ENCODE measurements at regions of chr2 and their contacts with region 1.

Region 1: DNA sequence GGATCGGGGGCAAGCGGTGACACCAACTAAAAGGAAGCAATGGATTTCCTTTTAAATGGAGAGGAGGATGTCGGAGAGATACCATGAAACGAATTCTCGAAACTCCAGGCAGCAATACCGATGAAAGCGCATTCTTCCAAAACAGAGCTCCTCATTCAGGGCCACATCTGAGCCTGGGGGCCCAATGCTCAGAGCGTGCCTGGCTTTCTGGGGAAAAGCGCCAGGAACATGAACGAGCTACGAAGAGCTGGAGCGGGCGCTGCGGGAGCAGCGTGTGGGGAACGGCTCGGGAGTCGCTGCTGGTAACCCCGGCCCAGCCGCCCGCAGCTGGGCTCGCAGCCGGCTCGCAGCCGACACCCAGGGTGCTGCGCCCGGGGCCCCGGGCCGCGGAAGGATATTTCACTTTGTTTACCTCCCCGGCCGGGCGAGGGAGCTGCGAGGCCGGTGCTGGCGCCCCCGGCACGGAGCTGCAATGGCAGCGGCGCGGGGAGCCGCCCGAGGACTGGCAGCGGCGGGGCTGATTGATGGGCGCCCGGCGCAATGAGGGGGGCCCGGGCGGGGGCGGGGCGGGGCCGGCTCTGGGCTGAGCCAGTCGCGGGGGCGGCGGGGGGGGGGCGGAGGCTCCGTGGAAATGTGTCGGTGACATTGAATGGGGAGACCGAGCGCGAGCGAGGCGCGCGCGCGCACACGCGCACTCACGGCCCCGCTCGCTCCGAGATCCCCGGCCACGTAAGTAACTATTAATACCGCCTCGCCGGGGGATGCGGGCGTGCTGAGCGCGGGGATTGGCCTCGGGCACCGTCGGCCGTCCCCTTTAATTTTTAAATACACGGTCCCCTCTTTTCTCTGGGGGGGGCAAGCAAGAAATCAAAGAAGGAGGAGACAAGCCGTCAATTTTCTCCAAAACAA is at the start of gene TRIB2:
- DNase-seq: peak; percentile 85 to 99 (median 92)
- ATAC-seq: peak; percentile 75
- H3K4me3 ChIP-seq: peak within 1 kb of the TSS; percentile 93
- H3K4me3 Mint-ChIP-seq: peak within 1 kb of the TSS; percentile 100
- H3K27ac ChIP-seq: peak within 1 kb of the TSS; percentile 68 to 88
- H3K27ac Mint-ChIP-seq: peak within 1 kb of the TSS; percentile 93
- H3K4me1 ChIP-seq: peaks cover 27% of the 10 kb centered on the region
- H3K4me1 Mint-ChIP-seq: peaks cover 49% of the 10 kb centered on the region
- H3K27me3 ChIP-seq: no peaks in the 10 kb centered on the region
- H3K27me3 Mint-ChIP-seq: no peaks in the 10 kb centered on the region
- CTCF ChIP-seq: peak; percentile 45
- total RNA-seq, gene TRIB2: 91.3 to 102 TPM

Region 2: DNA sequence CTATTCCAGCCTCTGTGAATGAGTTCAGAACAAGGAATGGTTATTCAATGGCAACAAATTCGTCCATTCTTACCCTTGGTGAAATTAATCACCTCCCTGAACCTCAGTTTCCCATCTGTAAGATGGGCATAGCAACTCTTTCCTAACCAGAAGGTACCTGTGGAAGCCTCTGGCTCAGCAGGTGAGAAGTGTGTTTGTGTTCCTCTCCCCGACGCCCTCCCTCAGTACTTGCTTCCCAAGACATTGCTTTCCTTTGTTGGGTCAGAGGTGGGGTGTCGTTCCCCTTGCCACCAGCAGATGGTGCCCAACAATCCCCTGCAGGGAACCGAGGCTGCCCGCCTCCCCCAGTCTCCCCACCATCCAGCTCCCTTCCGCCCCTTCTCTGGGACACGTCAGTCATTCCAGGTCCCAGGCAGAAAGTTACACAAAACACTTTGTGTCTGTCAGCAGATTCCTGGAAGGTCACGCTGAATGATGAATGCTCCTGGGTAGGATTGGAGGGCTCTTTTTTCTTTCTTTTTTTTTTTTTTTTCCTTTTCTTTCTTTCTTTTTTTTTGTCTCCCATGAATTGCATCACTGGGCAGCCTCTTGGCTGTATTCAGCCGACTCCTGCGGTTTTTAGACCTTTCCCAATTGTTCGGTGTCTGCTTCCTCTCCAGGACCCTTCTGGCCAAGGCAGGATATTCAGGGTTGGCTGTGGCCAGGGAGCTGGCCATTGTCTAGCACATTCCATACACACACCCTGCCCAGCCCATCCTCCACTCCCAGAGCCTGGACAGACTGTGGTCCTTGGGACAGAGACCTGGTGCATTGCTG is 852.8 kb before region 1 on chr2:
- CTCF ChIA-PET with region 1: interaction called, 6 read pairs
- POLR2A ChIA-PET with region 1: interaction called, 17 read pairs
- intact Hi-C with region 1: loop called (anchors 1 to 2 kb)
- DNase-seq: peak; percentile 50 to 86 (median 58)
- ATAC-seq: peak; percentile 83
- H3K4me3 ChIP-seq: peak overlapping the region; percentile 24
- H3K4me3 Mint-ChIP-seq: peak overlapping the region; percentile 18
- H3K27ac ChIP-seq: no peak overlapping the region
- H3K27ac Mint-ChIP-seq: no peak overlapping the region
- H3K4me1 ChIP-seq: peaks cover 15% of the 10 kb centered on the region
- H3K4me1 Mint-ChIP-seq: peaks cover 18% of the 10 kb centered on the region
- H3K27me3 ChIP-seq: no peaks in the 10 kb centered on the region
- H3K27me3 Mint-ChIP-seq: no peaks in the 10 kb centered on the region
- CTCF ChIP-seq: peak; percentile 97

Region 3: GRCh38 chr2:12131975-12132374 is 584.6 kb before region 1 on chr2:
- CTCF ChIA-PET with region 1: no interaction called
- POLR2A ChIA-PET with region 1: interaction called, 10 read pairs
- intact Hi-C with region 1: loop called (anchors 5 to 10 kb)
- DNase-seq: no peak
- ATAC-seq: no peak
- H3K4me3 ChIP-seq: no peak overlapping the region
- H3K4me3 Mint-ChIP-seq: no peak overlapping the region
- H3K27ac ChIP-seq: peak overlapping the region; percentile 18 to 22
- H3K27ac Mint-ChIP-seq: no peak overlapping the region
- H3K4me1 ChIP-seq: peaks cover 28% of the 10 kb centered on the region
- H3K4me1 Mint-ChIP-seq: no peaks in the 10 kb centered on the region
- H3K27me3 ChIP-seq: no peaks in the 10 kb centered on the region
- H3K27me3 Mint-ChIP-seq: no peaks in the 10 kb centered on the region
- CTCF ChIP-seq: no peak

Region 4: GRCh38 chr2:12416600-12416999 is 299.9 kb before region 1 on chr2:
- CTCF ChIA-PET with region 1: interaction called, 16 read pairs
- POLR2A ChIA-PET with region 1: interaction called, 22 read pairs
- intact Hi-C with region 1: loop called (anchors 1 kb)
- DNase-seq: peak; percentile 40 to 86 (median 65)
- ATAC-seq: peak; percentile 78
- H3K4me3 ChIP-seq: no peak overlapping the region
- H3K4me3 Mint-ChIP-seq: peak overlapping the region; percentile 5
- H3K27ac ChIP-seq: no peak overlapping the region
- H3K27ac Mint-ChIP-seq: peak overlapping the region; percentile 50
- H3K4me1 ChIP-seq: peaks cover 27% of the 10 kb centered on the region
- H3K4me1 Mint-ChIP-seq: peaks cover 64% of the 10 kb centered on the region
- H3K27me3 ChIP-seq: no peaks in the 10 kb centered on the region
- H3K27me3 Mint-ChIP-seq: no peaks in the 10 kb centered on the region
- CTCF ChIP-seq: peak; percentile 79

Region 5: DNA sequence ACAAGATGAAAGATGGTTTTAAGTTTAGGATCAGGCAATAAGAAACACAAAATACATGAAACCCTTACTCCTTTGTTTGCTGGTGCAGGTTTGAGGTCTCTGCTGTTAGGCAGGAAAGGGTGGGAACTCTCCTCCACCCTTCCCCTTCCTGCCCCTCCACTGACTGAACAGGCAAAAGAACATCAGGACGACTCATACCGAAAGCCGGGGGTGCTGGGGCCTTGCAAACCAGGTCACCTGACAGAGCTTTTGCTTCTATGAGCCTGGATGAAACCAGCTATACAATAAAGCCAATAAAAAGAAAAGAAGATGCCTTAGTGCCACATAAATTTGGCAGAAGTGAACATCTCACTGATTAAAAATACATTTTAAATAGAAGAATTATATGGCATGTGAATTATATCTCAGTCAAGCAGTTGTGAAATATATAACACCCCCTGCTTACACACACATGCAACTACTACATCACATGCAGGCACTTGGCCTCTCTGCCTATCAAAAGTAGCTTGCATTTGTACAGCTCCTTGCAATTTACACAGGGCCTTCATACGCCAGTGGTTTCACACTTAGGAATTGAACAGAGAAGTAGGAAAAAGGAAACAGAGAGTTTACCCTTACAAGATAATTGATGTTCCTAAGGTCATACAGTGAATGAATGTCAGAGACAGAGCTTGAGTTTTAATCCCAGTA is 214.9 kb before region 1 on chr2:
- CTCF ChIA-PET with region 1: interaction called, 10 read pairs
- POLR2A ChIA-PET with region 1: interaction called, 23 read pairs
- intact Hi-C with region 1: loop called (anchors 5 kb)
- DNase-seq: peak; percentile 21 to 89 (median 66)
- ATAC-seq: peak; percentile 93
- H3K4me3 ChIP-seq: no peak overlapping the region
- H3K4me3 Mint-ChIP-seq: peak overlapping the region; percentile 67
- H3K27ac ChIP-seq: peak overlapping the region; percentile 17 to 91
- H3K27ac Mint-ChIP-seq: peak overlapping the region; percentile 80
- H3K4me1 ChIP-seq: peaks cover 76% of the 10 kb centered on the region
- H3K4me1 Mint-ChIP-seq: peaks cover 100% of the 10 kb centered on the region
- H3K27me3 ChIP-seq: no peaks in the 10 kb centered on the region
- H3K27me3 Mint-ChIP-seq: no peaks in the 10 kb centered on the region
- CTCF ChIP-seq: no peak

Region 6: DNA sequence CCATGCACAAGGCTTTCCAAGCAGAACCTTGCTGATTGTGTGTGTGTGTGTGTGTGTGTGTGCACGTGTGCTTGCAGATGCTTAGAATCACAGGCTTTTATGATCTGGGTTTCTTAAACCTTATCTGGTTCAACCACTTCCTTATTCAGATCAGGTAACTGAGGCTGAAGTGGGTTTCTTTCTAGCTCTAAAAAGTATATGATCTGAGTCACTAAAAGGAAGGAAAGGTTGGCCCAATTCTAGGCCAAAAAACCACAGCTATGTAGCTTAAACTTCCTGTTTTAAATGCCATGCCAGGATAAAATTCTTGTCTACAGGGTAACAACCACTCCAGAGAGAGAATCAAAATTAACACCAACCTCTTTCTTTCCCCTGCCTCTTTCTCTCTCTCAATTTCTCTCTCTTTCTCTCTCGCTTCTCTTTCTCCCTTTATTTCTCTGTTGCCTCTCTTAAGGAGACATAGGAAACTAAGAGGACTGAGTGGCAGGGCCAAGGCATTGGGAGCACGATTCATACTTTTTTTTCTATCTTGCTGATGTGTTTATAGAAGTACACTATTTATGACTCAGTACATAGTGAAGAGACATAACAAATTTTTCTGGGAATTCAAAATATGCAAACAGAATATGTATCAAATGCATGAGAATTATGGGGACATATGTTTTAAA is 140.5 kb after region 1 on chr2:
- CTCF ChIA-PET with region 1: interaction called, 4 read pairs
- POLR2A ChIA-PET with region 1: interaction called, 6 read pairs
- intact Hi-C with region 1: loop called in 1 of 2 experiments (anchors 5 kb)
- DNase-seq: peak in 11 of 14 experiments; percentile 3 to 87 (median 22)
- ATAC-seq: peak; percentile 88
- H3K4me3 ChIP-seq: no peak overlapping the region
- H3K4me3 Mint-ChIP-seq: no peak overlapping the region
- H3K27ac ChIP-seq: no peak overlapping the region
- H3K27ac Mint-ChIP-seq: no peak overlapping the region
- H3K4me1 ChIP-seq: peaks cover 52% of the 10 kb centered on the region
- H3K4me1 Mint-ChIP-seq: peaks cover 12% of the 10 kb centered on the region
- H3K27me3 ChIP-seq: no peaks in the 10 kb centered on the region
- H3K27me3 Mint-ChIP-seq: no peaks in the 10 kb centered on the region
- CTCF ChIP-seq: no peak

Measured in CD4-positive, alpha-beta T cell (primary cell).